Left cardiac atrium (tissue), 4 donors: ENCODE measurements at regions of chrX and their contacts with region 1.

Region 1: DNA sequence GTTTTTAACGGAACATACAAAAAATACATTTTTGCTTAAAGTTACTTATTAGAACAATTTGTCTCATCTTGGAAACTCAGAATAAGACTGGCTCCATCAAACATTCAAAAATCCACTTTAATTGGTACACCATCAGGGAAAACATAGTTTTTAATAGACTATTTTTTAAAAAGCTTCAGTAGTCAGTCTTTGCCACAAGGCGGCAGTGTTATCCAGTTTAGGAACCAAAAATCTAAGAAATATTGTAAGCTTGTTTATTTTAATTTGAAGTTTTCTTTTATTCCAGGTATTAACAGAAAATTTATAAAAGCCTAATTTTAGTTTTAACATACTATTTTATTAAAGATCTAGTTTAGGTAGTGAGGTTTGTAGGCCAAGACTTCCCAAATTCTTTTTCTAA is 107.7 kb downstream of the APOOL start:
- DNase-seq: no peak
- ATAC-seq: no peak

Region 2: GRCh38 chrX:85544609-85545008 is 433.3 kb after region 1 on chrX:
- intact Hi-C with region 1: loop called (anchors 2 to 10 kb)
- DNase-seq: no peak
- ATAC-seq: no peak

Region 3: GRCh38 chrX:85561231-85561630 is 449.9 kb after region 1 on chrX:
- intact Hi-C with region 1: no loop called
- DNase-seq: no peak
- ATAC-seq: no peak